ENCODE measurements at regions of chr12 and their contacts with region 1.

Region 1: GRCh38 chr12:71685914-71686665 is at the start of gene TMEM19:
- DNase-seq: peak; percentile 97
- H3K4me3 ChIP-seq: peak within 1 kb of the TSS; percentile 79 to 84 (median 81)
- H3K27ac ChIP-seq: peak within 1 kb of the TSS; percentile 89 to 91 (median 90)
- H3K4me1 ChIP-seq: peaks cover 17 to 36% (median 34%) of the 10 kb centered on the region in 4 donors
- H3K27me3 ChIP-seq: no peaks in the 10 kb centered on the region
- CTCF ChIP-seq: peak in 2 of 3 experiments; percentile 3 to 31
- EP300 ChIP-seq: no peak
- POLR2A ChIP-seq: peak; percentile 29
- total RNA-seq, gene TMEM19: 9.6 to 24.2 (median 16.6) TPM

Region 2: DNA sequence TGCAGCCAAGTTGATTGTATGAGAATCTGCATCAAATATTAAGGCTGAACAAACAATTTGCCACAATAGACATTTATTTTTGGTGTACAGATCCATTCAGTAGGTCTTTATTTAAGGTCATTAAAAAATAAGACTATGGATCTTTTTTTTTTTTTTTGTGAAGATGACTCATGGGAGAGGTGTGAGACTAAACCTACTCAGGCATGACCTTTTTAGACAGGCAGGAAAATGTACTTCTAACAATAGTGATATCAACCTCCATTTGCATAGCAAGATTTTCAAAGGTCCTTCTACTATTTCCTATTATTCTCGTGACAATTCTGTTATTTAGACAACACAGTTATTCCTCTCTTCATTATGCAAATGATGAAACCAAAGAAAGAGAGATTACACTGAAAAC is 725.6 kb before region 1 on chr12:
- intact Hi-C with region 1: no loop called
- DNase-seq: no peak
- H3K4me3 ChIP-seq: no peak overlapping the region
- H3K27ac ChIP-seq: no peak overlapping the region
- H3K4me1 ChIP-seq: no peaks in the 10 kb centered on the region
- H3K27me3 ChIP-seq: no peaks in the 10 kb centered on the region
- CTCF ChIP-seq: no peak
- EP300 ChIP-seq: no peak
- POLR2A ChIP-seq: no peak

Region 3: DNA sequence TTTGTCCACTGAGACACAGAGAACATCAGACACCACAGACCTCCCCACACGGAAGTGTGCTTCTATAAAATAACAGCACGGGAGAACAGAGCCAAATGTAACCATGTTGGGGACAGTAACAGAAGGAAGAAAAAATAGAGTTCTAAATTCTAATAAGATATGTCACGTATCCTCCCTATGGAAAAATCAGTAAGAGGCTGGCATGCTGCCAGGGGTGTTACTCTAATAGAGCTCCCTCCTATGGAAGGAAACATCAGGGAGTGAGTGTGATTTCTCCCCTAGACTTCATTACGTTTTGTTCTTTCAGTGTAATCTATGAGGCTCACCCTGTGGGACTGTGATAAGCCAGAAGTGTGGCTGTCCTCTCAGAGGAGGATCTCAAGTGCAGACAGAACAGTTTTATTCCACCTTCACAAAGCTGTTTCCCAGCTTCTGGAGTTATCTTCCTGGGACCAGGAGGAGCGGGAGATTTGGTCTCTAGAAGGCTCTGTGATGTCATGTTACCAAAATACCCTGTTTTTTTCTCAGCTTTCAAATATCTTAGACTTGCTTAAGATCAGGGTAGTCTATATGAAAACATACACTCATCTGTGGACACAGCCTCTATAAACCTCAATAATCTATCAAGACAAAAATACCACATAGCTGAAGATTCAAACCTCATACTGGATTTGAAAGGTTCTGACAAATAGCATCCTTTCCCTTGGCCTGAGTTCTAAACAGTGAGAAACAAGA is 91.7 kb before region 1 on chr12:
- intact Hi-C with region 1: no loop called
- DNase-seq: no peak
- H3K4me3 ChIP-seq: no peak overlapping the region
- H3K27ac ChIP-seq: no peak overlapping the region
- H3K4me1 ChIP-seq: no peaks in the 10 kb centered on the region
- H3K27me3 ChIP-seq: peaks cover 0 to 47% (median 2%) of the 10 kb centered on the region in 4 donors
- CTCF ChIP-seq: no peak
- EP300 ChIP-seq: no peak
- POLR2A ChIP-seq: no peak

Region 4: GRCh38 chr12:71663561-71664294 is 22.4 kb before region 1 on chr12 and contains the start of gene ZFC3H1:
- intact Hi-C with region 1: loop called (anchors 2 kb)
- DNase-seq: peak; percentile 97
- H3K4me3 ChIP-seq: peak within 1 kb of the TSS; percentile 77 to 87 (median 82)
- H3K27ac ChIP-seq: peak within 1 kb of the TSS; percentile 94 to 96 (median 95)
- H3K4me1 ChIP-seq: peaks cover 22 to 46% (median 36%) of the 10 kb centered on the region in 4 donors
- H3K27me3 ChIP-seq: no peaks in the 10 kb centered on the region
- CTCF ChIP-seq: peak in 2 of 3 experiments; percentile 14 to 23
- EP300 ChIP-seq: no peak
- POLR2A ChIP-seq: peak; percentile 90
- total RNA-seq, gene ZFC3H1: 19.4 to 44.0 (median 25.9) TPM

Measured in esophagus muscularis mucosa (tissue), 4 donors.